Activated CD4-positive, alpha-beta memory T cell treated with anti-CD3 and anti-CD28 coated beads, Interleukin-2, amount 10 ng/mL, durations not matched to agents 7 days and 5 days (primary cell): ENCODE measurements at regions of chr2 and their contacts with region 1.

Region 1: DNA sequence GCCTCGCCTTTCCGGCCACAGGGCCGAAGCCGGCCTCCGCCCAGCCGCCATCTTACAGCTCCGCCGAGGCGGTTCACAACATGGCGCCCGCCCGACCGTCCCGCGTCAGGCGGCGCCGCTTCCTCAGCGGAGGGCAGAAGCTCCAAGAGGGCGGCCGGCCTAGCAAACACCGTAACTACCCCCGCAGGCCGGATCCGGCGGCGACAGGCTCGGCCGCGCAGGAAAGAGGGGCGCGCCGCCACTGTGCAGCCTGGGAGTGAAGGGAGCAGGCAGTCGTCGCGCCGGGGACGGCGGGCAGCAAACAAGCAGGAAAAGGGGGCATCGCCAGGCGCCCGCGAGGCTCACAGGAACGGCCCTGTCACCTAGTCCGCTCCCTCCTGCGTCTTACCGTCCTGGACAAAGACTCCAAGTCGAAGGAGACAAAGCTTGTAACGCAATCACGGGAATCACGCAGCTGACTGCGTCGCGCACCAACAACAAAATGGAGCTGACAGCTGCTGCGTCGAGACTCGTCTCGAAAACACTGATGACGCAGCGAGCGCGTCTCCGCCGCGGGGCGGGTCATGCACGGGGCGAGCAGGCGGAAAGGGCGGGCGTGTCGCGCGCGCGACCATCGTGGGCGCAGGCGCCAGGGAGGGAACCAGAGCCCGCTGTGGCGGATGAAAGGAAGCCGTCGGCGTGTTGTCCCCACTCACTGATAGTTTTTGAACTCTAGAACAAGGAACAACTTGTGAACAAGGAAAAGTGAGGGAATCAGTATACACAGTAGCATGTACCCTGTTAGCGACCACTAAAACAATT is at the start of gene CLK1:
- DNase-seq: peak; percentile 97
- H3K4me3 Mint-ChIP-seq: peak within 1 kb of the TSS; percentile 94
- H3K27ac Mint-ChIP-seq: peak within 1 kb of the TSS; percentile 100
- H3K4me1 Mint-ChIP-seq: peaks cover 53% of the 10 kb centered on the region
- H3K27me3 Mint-ChIP-seq: no peaks in the 10 kb centered on the region
- total RNA-seq, gene CLK1: 164 to 169 TPM

Region 2: GRCh38 chr2:200442471-200442870 is 421.9 kb before region 1 on chr2:
- CTCF ChIA-PET with region 1: no interaction called
- POLR2A ChIA-PET with region 1: no interaction called
- DNase-seq: no peak
- H3K4me3 Mint-ChIP-seq: no peak overlapping the region
- H3K27ac Mint-ChIP-seq: no peak overlapping the region
- H3K4me1 Mint-ChIP-seq: peaks cover 17% of the 10 kb centered on the region
- H3K27me3 Mint-ChIP-seq: no peaks in the 10 kb centered on the region

Region 3: DNA sequence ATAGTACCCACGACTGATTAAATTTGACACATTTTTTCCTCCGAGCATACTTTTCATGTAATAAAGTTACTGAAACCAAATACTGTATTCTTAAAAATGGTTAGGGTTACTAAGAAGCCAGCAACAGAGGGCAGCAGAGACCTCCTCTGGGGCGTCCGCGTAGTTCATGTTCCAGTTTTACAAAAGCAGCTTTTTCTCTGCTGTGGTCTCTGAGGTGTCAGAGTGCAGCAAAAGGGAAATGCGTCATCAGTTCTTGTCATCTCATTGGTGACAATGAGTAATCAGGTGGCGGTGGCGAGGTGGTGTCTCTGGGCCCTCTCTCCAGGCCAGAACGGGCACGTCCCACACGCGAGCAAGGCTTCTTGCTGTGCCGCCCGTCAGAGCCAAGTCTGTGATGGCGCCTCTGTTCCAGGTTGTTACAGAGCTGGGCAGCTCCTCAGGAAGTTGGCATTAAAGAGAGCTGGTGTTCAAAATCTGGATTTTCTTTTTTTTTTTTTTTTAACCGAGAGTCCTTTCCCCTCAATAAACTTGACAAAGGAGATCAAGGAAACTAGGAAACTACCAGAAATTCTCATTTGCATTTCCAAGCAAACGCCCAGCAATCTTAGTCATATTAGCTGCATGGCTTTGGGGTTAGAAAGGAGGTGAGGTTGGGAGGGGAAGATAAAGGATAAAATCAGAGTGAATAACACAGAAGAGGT is 151.2 kb before region 1 on chr2:
- CTCF ChIA-PET with region 1: interaction called, 9 read pairs
- POLR2A ChIA-PET with region 1: interaction called, 39 read pairs
- DNase-seq: peak; percentile 96
- H3K4me3 Mint-ChIP-seq: peak overlapping the region; percentile 49
- H3K27ac Mint-ChIP-seq: peak overlapping the region; percentile 97
- H3K4me1 Mint-ChIP-seq: peaks cover 25% of the 10 kb centered on the region
- H3K27me3 Mint-ChIP-seq: no peaks in the 10 kb centered on the region

Region 4: DNA sequence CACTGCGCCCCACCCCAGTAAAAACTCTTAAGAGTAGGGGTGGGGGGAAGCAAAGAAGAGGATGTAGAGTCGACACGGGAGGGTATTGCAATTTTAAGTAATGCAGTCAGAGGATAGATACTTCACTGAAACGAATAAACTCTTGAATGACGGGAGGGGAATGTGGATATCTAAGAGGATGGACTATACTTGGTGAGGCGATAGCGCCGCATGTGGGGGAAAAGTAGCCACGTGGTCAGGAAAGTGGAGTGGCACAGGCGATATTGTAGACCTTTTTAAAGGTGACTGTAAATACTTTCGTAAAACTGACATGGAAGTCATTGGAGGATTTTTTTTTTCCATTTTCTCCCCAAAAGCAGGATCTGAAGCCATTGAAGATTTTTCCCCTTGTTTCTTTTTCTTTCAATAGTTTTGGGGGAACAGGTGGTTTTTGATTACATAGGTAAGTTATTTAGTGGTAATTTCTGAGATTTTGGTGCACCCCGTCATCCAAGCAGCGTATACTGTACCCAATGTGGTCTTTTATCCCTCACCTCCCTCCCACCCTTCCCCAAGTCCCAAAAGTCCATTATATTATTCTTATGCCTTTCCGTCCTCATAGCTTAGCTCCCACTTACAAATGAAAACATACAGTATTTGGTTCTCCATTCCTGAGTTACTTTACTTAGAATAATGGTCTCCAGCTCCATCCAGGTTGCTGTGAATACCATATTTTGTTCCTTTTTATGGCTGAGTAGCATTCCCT is 13.7 kb before region 1 on chr2:
- CTCF ChIA-PET with region 1: no interaction called
- POLR2A ChIA-PET with region 1: interaction called, 19 read pairs
- DNase-seq: no peak
- H3K4me3 Mint-ChIP-seq: no peak overlapping the region
- H3K27ac Mint-ChIP-seq: no peak overlapping the region
- H3K4me1 Mint-ChIP-seq: peaks cover 2% of the 10 kb centered on the region
- H3K27me3 Mint-ChIP-seq: no peaks in the 10 kb centered on the region

Region 5: GRCh38 chr2:200901459-200902072 is 37.2 kb after region 1 on chr2:
- CTCF ChIA-PET with region 1: no interaction called
- POLR2A ChIA-PET with region 1: interaction called, 12 read pairs
- DNase-seq: peak; percentile 81
- H3K4me3 Mint-ChIP-seq: no peak overlapping the region
- H3K27ac Mint-ChIP-seq: peak overlapping the region; percentile 53
- H3K4me1 Mint-ChIP-seq: peaks cover 32% of the 10 kb centered on the region
- H3K27me3 Mint-ChIP-seq: no peaks in the 10 kb centered on the region

Region 6: GRCh38 chr2:200930947-200931626 is 66.7 kb after region 1 on chr2:
- CTCF ChIA-PET with region 1: no interaction called
- POLR2A ChIA-PET with region 1: no interaction called
- DNase-seq: no peak
- H3K4me3 Mint-ChIP-seq: no peak overlapping the region
- H3K27ac Mint-ChIP-seq: no peak overlapping the region
- H3K4me1 Mint-ChIP-seq: peaks cover 12% of the 10 kb centered on the region
- H3K27me3 Mint-ChIP-seq: no peaks in the 10 kb centered on the region

Region 7: DNA sequence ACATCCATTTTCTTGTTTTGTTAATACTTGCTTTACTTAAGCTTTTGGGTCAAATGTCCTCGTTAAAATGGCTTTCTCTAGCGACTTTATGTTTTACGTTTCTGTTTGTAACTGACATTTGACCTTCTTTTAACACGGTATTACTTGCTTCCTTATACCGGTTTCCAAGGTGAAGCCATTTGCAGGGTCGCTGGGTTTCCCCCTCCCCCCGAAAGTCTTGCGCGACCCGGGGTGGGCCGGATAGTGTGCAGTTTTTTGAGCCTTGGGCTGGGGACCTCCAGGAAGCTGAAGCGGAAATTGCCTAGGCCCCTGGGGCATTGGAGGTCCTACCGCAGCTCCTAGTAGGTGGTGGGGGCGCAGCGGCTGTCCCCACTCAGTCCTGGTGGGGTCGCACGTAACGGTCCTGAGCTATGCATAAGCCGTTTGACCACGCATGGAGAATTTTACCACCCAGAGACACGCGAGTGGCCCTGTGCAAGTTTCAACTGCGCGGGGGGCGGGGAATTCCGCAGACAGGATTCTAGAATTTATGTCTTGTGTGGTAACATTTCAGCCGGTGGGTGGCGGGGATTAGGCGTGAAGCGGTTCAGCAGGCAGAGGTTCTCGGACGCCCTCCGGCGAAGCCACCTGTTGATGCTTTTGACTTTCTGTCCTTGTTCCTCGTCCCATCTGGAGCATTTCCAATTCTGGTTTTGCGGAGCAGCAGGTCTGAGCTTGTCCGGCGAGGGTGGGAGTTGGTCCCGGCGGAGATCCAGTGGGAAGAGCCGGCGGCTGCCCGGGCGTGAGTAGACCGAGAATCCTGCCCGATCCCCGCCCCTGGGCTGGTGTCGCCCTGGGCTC is 254.0 kb after region 1 on chr2:
- CTCF ChIA-PET with region 1: interaction called, 4 read pairs
- POLR2A ChIA-PET with region 1: interaction called, 76 read pairs
- DNase-seq: peak; percentile 90
- H3K4me3 Mint-ChIP-seq: peak overlapping the region; percentile 96
- H3K27ac Mint-ChIP-seq: peak overlapping the region; percentile 98
- H3K4me1 Mint-ChIP-seq: peaks cover 50% of the 10 kb centered on the region
- H3K27me3 Mint-ChIP-seq: no peaks in the 10 kb centered on the region

Region 8: DNA sequence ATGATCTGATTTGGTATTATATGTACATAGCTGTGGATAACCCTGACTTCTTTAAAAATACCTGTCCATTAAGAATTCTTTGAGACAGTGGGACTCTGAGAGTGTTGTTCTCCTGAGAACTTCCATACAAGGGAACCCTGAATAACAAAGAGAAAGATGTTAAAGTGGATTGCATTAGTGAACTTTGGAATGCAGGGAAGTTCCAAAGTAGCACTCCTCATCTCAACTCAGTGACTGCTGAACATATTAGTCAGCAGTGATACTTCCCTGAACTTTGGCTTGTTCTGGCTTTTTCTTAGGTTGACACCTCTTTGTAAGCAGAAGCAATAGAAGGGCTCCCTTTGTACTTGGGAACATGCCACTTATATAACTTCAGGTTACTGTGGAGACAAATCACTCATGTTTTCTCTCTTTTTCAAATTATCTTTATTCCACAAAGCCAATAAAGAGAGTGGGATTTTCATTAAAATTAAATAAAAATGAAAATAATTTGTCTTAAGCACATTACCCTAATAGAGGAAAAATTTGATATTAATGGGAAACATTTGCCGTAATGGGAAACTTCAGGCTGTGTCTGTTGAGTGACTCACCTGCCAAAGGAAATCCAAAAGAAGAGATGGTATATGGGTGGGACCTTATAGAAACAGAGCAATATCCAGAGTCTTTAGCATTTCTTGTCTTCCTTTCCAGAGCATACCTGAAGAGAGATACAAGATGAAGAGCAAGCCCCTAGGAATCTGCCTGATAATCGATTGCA is 284.9 kb after region 1 on chr2:
- CTCF ChIA-PET with region 1: no interaction called
- POLR2A ChIA-PET with region 1: no interaction called
- DNase-seq: no peak
- H3K4me3 Mint-ChIP-seq: no peak overlapping the region
- H3K27ac Mint-ChIP-seq: peak overlapping the region; percentile 38
- H3K4me1 Mint-ChIP-seq: peaks cover 31% of the 10 kb centered on the region
- H3K27me3 Mint-ChIP-seq: no peaks in the 10 kb centered on the region

Region 9: GRCh38 chr2:201257956-201258665 is 393.7 kb after region 1 on chr2:
- CTCF ChIA-PET with region 1: no interaction called
- POLR2A ChIA-PET with region 1: interaction called, 45 read pairs
- DNase-seq: peak; percentile 96
- H3K4me3 Mint-ChIP-seq: peak overlapping the region; percentile 81
- H3K27ac Mint-ChIP-seq: peak overlapping the region; percentile 98
- H3K4me1 Mint-ChIP-seq: peaks cover 68% of the 10 kb centered on the region
- H3K27me3 Mint-ChIP-seq: no peaks in the 10 kb centered on the region